ENCODE measurements at regions of chr14 and their contacts with region 1.

Region 1: DNA sequence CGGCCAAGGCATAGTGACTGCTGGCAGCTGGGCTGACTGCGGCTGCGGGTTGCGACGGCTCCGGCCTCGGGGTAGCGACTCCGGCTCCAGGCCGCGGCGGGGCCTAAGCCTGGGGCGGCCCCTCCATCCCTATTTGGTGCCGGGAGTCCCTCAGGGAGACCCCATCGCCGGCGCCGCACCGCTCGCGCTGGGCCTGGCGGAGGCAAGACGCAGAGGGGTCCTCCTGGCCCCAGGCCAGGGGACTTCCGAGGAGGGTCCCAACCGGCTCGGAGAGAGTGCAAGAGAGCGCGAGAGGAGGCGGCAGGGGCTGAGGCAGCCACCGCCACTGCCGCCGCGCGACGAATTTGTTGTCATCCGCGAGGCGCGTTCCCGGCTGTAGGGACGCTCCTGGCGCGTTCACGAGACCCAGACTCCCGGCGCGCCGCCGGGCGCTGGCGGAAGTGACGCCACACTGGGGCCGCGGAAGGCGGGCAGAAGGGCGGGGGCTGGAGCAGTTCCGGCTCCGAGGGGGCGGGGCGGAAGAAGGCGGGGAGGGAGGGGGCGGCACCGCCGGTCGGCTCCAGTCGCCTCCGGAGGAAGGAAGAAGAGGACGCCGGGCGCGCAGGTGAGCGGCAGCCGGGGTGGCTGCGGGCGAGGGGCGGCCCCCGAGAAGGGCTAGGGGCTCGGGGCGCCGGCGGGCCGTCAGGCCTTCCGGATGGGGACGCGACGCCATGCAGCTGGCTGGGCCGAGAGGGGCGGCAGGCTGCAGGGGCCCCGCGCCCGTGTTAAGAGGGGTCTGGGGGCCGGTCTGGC is at the starts of genes ATG2B and GSKIP:
- DNase-seq: peak; percentile 99
- ATAC-seq: peak; percentile 79
- H3K4me3 Mint-ChIP-seq: peak within 1 kb of the TSS; percentile 86
- H3K27ac Mint-ChIP-seq: peak within 1 kb of the TSS; percentile 90
- H3K4me1 Mint-ChIP-seq: peaks cover 55% of the 10 kb centered on the region
- H3K27me3 Mint-ChIP-seq: no peaks in the 10 kb centered on the region
- total RNA-seq, gene ATG2B: 13.5 to 17.6 TPM
- total RNA-seq, gene GSKIP: 12.1 to 20.7 TPM

Region 2: GRCh38 chr14:95534299-95535225 is 828.6 kb before region 1 on chr14 and contains the start of gene GLRX5:
- CTCF ChIA-PET with region 1: no interaction called
- POLR2A ChIA-PET with region 1: no interaction called
- intact Hi-C with region 1: loop called in 1 of 2 experiments (anchors 1 kb)
- DNase-seq: peak; percentile 98
- ATAC-seq: peak; percentile 94
- H3K4me3 Mint-ChIP-seq: peak within 1 kb of the TSS; percentile 93
- H3K27ac Mint-ChIP-seq: peak within 1 kb of the TSS; percentile 94
- H3K4me1 Mint-ChIP-seq: peaks cover 60% of the 10 kb centered on the region
- H3K27me3 Mint-ChIP-seq: no peaks in the 10 kb centered on the region
- total RNA-seq, gene GLRX5: 37.9 to 44.1 TPM

Region 3: GRCh38 chr14:96304956-96305355 is 58.2 kb before region 1 on chr14:
- CTCF ChIA-PET with region 1: no interaction called
- POLR2A ChIA-PET with region 1: interaction called, 10 read pairs
- intact Hi-C with region 1: no loop called
- DNase-seq: peak; percentile 11
- ATAC-seq: no peak
- H3K4me3 Mint-ChIP-seq: no peak overlapping the region
- H3K27ac Mint-ChIP-seq: no peak overlapping the region
- H3K4me1 Mint-ChIP-seq: no peaks in the 10 kb centered on the region
- H3K27me3 Mint-ChIP-seq: no peaks in the 10 kb centered on the region

Region 4: GRCh38 chr14:96424109-96424989 is 61.2 kb after region 1 on chr14:
- CTCF ChIA-PET with region 1: no interaction called
- POLR2A ChIA-PET with region 1: no interaction called
- intact Hi-C with region 1: loop called in 1 of 2 experiments (anchors 1 kb)
- DNase-seq: peak; percentile 53
- ATAC-seq: peak; percentile 77
- H3K4me3 Mint-ChIP-seq: peak overlapping the region; percentile 54
- H3K27ac Mint-ChIP-seq: no peak overlapping the region
- H3K4me1 Mint-ChIP-seq: peaks cover 2% of the 10 kb centered on the region
- H3K27me3 Mint-ChIP-seq: peaks cover 3% of the 10 kb centered on the region

Region 5: GRCh38 chr14:96796851-96797581 is 433.9 kb after region 1 on chr14 and contains the start of gene VRK1:
- CTCF ChIA-PET with region 1: no interaction called
- POLR2A ChIA-PET with region 1: no interaction called
- intact Hi-C with region 1: loop called in 1 of 2 experiments (anchors 1 kb)
- DNase-seq: peak; percentile 96
- ATAC-seq: peak; percentile 98
- H3K4me3 Mint-ChIP-seq: peak within 1 kb of the TSS; percentile 92
- H3K27ac Mint-ChIP-seq: peak within 1 kb of the TSS; percentile 88
- H3K4me1 Mint-ChIP-seq: peaks cover 24% of the 10 kb centered on the region
- H3K27me3 Mint-ChIP-seq: peaks cover 6% of the 10 kb centered on the region
- total RNA-seq, gene VRK1: 63.1 to 83.3 TPM